Activated CD4-positive, alpha-beta T cell treated with anti-CD3 and anti-CD28 coated beads for 36 hours (primary cell): ENCODE measurements at regions of chr1 and their contacts with region 1.

Region 1: DNA sequence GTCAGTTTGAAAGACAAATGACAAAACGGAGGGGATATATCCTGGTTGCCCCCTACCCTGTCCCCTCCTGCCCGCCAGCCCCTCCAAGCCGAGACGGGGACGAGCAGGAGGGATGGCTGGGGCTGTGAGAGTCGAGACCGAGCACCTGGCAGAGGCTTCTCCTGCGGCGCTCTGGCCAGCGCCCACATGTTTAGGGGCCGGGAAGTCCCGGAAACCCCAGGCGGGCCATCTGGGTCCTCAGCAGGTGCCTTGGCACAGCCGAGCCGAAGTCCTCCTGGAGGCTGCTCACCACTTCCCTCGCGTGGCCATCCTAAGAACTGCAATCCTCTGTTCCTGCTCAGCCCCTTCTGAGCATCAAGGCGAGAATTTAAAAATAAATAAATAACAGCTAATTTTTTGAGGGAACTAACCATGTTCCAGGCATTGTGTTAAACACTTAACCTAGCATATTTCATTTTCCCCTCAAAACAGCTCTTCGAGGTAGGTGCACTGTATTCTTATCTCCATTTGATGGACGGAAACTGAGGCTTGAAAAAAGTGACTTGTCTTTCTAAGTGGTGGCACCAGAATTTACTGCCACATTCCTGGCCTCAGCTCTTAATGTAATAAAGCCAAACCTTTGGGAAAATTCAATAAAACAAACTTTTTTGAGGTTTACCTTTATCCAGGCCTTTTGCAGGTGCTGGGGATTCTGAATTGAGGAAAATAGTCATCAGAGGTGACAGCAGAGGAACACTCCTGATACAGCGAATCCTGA is 3.5 kb upstream of the RIMS3 start:
- DNase-seq: peak; percentile 92
- ATAC-seq: peak; percentile 58
- H3K4me3 Mint-ChIP-seq: peak overlapping the region; percentile 46
- H3K27ac Mint-ChIP-seq: no peak overlapping the region
- H3K4me1 Mint-ChIP-seq: peaks cover 14% of the 10 kb centered on the region
- H3K27me3 Mint-ChIP-seq: no peaks in the 10 kb centered on the region

Region 2: GRCh38 chr1:40344597-40344996 is 324.4 kb before region 1 on chr1:
- CTCF ChIA-PET with region 1: no interaction called
- POLR2A ChIA-PET with region 1: no interaction called
- intact Hi-C with region 1: loop called in 1 of 2 experiments (anchors 5 kb)
- DNase-seq: peak; percentile 60
- ATAC-seq: peak; percentile 44
- H3K4me3 Mint-ChIP-seq: peak overlapping the region; percentile 48
- H3K27ac Mint-ChIP-seq: peak overlapping the region; percentile 79
- H3K4me1 Mint-ChIP-seq: peaks cover 49% of the 10 kb centered on the region
- H3K27me3 Mint-ChIP-seq: no peaks in the 10 kb centered on the region

Region 3: DNA sequence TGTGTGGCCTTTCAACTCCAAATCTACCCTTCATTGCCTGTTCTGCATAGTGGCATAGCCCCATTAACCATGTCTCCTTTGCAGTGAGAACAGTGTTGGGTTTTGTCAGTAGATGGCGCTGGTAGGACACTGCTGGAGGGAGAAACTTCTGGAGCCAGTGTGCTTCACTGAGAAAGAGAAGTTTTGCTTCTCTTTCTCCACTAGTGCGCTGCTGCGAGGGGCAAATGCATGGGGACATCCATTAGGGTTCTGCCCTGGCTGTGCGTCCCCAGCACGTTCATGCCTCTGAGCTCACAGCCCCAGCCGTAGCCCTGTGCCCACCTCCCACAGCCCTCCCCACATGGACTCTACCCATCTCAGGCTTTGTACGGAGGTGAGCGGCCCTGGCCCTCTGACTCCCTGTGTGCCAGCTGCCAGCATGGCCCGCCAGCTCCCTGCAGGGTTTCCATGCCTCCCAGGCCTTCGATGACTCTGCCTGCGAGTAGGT is 56.6 kb before region 1 on chr1:
- CTCF ChIA-PET with region 1: interaction called, 5 read pairs
- POLR2A ChIA-PET with region 1: no interaction called
- intact Hi-C with region 1: loop called (anchors 1 to 2 kb)
- DNase-seq: peak; percentile 84
- ATAC-seq: peak; percentile 97
- H3K4me3 Mint-ChIP-seq: no peak overlapping the region
- H3K27ac Mint-ChIP-seq: no peak overlapping the region
- H3K4me1 Mint-ChIP-seq: no peaks in the 10 kb centered on the region
- H3K27me3 Mint-ChIP-seq: no peaks in the 10 kb centered on the region

Region 4: DNA sequence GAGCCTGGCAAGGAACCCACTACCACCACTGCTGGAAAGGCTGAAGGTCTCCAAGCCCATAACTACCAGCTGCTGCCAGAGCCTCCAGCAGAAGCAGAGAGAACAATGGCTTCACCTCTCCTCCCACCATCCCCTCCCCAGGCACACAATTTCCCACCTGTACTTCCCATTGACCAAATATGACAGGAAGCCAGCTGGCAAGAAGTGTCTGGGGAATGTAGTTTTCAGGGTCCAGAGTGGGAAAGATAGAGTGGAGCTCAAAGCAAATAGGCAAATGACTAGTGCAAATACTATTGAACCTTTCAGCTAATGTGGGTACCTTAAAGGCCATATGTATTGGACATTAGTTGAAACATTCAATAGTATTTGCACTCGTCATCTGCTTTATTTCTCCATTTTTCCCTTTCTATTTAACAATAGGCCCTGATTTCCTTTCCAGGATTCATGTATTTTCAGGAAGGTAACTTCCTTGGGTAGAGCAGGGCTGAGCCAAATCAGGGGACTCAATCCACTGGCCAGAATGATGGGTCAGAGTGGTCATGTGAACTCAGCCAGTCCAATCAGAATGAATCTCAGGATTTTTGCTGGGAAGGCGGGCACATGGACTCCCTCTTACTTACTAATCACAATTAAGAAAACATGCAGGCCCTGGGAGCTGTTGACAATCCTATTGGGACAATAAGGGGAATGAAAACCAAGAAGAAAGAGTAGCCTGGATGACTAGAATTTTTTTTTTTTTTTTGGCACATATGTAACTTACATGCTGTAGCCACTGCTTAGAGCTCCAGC is 10.4 kb after region 1 on chr1:
- CTCF ChIA-PET with region 1: interaction called, 21 read pairs
- POLR2A ChIA-PET with region 1: no interaction called
- intact Hi-C with region 1: no loop called
- DNase-seq: no peak
- ATAC-seq: no peak
- H3K4me3 Mint-ChIP-seq: no peak overlapping the region
- H3K27ac Mint-ChIP-seq: no peak overlapping the region
- H3K4me1 Mint-ChIP-seq: no peaks in the 10 kb centered on the region
- H3K27me3 Mint-ChIP-seq: no peaks in the 10 kb centered on the region

Region 5: DNA sequence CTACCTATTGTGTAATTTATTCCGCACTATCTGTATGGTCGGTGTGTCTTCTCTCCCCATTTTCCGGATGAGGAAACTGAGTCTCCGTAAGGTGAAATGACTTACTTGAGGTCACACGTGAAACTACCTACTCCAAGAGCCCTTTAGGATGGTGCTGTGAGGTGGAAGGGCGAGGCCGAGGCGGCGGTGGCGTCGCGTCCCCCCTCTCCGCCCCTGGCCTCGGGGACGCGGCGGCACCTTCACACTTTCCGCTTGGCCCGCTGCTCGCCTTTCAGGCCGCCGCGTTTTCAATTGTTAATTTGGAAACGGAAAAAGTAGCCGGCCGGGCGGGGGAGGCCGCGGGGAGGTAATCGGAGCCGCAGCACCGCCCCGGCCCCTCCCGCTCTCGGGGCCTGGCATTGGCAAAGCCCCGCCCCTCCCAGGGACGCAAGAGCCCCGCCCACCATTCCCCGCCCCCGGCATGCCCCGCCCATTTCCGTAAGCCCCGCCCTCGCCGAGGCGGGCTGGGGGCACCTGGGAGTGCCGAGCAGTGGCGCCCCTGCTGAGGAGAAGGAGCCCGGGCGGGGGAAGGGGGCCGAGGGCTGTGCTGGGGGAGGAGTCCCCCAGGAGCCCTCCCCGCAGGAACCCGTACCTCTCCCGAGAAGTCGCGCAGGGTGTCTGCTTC is 133.3 kb after region 1 on chr1:
- CTCF ChIA-PET with region 1: no interaction called
- POLR2A ChIA-PET with region 1: no interaction called
- intact Hi-C with region 1: loop called in 1 of 2 experiments (anchors 1 kb)
- DNase-seq: peak; percentile 93
- ATAC-seq: peak; percentile 95
- H3K4me3 Mint-ChIP-seq: peak overlapping the region; percentile 48
- H3K27ac Mint-ChIP-seq: no peak overlapping the region
- H3K4me1 Mint-ChIP-seq: peaks cover 25% of the 10 kb centered on the region
- H3K27me3 Mint-ChIP-seq: no peaks in the 10 kb centered on the region

Region 6: DNA sequence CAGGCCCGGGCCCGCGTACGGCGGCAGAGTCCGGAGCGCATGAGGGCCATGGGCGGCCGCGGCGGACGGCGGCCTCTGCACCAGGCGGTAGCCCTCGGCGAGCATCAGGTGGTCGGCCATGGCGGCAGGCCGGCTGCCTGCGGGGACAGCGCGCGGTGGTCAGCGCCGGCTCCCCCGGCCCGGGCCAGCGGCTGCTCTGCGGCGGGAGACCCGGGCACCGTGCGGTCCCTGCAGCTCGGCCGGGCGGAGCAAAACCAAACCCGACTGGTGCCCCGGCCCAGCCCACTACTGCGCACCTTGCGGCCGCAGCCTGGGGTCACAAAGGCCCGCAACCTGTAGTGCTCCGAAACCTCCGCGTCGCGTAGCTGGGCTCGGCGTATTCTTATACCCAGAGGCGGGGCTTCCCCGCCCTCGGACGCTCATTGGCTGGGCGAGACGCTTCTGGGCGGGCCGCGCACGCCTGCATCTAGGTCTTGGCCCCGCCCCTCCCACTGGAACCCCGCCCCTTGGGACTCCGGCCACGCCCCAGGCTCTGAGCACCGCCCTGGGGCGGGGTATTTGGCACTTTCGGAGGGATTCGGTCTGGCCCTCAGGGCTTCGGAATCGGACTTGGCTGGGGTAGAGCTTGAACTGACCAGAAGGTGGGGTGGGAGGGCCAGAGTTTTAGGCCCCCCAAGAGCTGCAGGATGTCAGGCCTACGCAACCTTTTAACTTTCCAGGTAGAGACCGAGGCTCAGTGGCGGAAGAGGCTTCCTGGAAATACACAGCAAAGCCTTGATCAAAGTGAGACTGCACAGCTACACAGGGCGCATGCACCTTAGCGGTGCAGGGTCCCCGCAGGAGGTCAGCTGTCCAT is 193.3 kb after region 1 on chr1 and contains the start of gene CITED4:
- CTCF ChIA-PET with region 1: no interaction called
- POLR2A ChIA-PET with region 1: no interaction called
- intact Hi-C with region 1: loop called (anchors 1 kb)
- DNase-seq: peak; percentile 97
- ATAC-seq: peak; percentile 98
- H3K4me3 Mint-ChIP-seq: peak within 1 kb of the TSS; percentile 84
- H3K27ac Mint-ChIP-seq: peak within 1 kb of the TSS; percentile 96
- H3K4me1 Mint-ChIP-seq: peaks cover 11% of the 10 kb centered on the region
- H3K27me3 Mint-ChIP-seq: peaks cover 11% of the 10 kb centered on the region
- total RNA-seq, gene CITED4: 1.6 to 3.0 TPM